ENCODE measurements at regions of chr1 and their contacts with region 1.

Region 1: DNA sequence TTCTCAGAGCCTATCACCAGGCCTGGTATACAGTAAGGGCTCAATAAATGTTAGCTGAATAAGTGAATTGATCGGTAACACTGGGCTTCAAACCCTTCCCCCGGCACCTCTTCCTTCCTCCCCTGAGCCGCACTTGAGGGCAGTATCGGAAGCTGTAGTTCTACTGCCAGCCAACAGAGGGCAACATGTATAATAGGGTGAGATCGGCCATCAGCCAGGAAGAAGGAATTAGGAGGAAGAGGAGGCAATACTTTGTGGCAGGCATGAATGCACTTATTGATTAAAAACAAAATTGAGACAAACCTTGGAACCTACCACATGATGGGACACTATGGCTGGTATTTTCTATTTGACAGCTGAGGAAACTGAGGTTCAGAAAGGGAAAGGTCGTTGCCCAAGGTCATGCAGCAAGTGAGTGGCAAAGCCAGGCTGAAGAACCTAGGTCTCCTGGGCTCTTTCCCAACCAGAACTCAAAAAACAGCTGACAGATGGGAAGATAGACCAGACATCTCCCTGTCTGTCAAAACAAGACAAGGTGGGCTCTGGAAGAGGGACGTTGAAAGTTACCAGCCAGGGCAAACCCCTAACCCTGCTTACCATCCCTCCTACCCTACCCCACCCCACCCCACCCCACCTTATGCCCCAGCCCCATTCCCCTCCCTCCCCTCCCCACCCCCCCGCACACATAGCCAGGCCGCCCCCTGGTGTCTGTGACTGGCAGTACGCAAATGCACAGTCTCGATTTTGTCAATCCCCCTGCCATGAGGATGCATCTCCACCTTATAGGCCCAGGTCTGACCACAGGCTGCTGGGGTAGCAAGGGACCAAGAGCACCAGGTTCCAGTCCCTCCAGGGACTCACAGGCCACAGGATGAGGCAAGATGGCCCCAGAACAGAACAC is 107.3 kb upstream of the RUNX3 start:
- DNase-seq: peak; percentile 52 to 84 (median 63)
- ATAC-seq: peak; percentile 77
- H3K4me3 ChIP-seq: no peak overlapping the region
- H3K4me3 Mint-ChIP-seq: peak overlapping the region; percentile 4
- H3K27ac ChIP-seq: no peak overlapping the region
- H3K27ac Mint-ChIP-seq: peak overlapping the region; percentile 28
- H3K4me1 ChIP-seq: peaks cover 56% of the 10 kb centered on the region
- H3K4me1 Mint-ChIP-seq: peaks cover 30% of the 10 kb centered on the region
- H3K27me3 ChIP-seq: no peaks in the 10 kb centered on the region
- H3K27me3 Mint-ChIP-seq: no peaks in the 10 kb centered on the region
- CTCF ChIP-seq: peak; percentile 72

Region 2: GRCh38 chr1:24952413-24952841 is 85.0 kb before region 1 on chr1:
- CTCF ChIA-PET with region 1: interaction called, 16 read pairs
- POLR2A ChIA-PET with region 1: interaction called, 6 read pairs
- intact Hi-C with region 1: no loop called
- DNase-seq: peak in 5 of 14 experiments; percentile 34 to 77 (median 68)
- ATAC-seq: peak; percentile 17
- H3K4me3 ChIP-seq: no peak overlapping the region
- H3K4me3 Mint-ChIP-seq: peak overlapping the region; percentile 54
- H3K27ac ChIP-seq: no peak overlapping the region
- H3K27ac Mint-ChIP-seq: peak overlapping the region; percentile 19
- H3K4me1 ChIP-seq: peaks cover 54% of the 10 kb centered on the region
- H3K4me1 Mint-ChIP-seq: peaks cover 63% of the 10 kb centered on the region
- H3K27me3 ChIP-seq: no peaks in the 10 kb centered on the region
- H3K27me3 Mint-ChIP-seq: no peaks in the 10 kb centered on the region
- CTCF ChIP-seq: no peak

Region 3: DNA sequence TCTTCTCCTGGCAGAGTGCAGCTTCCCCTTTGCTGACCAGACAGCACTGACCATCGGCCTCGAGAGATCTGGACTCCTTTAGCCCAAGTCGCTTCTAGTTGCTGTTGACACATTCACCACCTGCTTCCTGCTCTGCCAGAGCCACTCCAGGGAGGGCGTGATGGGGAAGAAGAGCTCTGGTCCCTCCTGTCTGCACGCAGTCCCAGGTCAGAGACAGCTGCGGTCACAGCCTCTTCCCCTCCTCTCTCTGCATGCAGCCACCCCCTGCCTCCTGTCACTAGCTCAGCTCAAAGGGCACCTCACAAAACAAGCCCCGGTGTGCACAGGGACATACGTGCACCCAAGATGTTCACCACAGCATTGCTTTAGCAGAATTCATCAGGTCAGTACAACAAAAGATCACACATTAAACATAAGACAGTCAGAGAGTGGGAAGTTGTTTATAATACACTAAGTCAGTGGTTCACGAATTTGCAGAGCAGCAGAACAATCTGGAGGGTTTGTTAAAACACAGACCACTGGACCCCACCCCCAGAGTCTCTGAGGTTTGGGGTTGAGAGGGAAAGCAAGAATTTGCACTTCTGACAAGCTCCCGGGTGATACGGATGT is 62.0 kb after region 1 on chr1:
- CTCF ChIA-PET with region 1: interaction called, 4 read pairs
- POLR2A ChIA-PET with region 1: interaction called, 3 read pairs
- intact Hi-C with region 1: loop called (anchors 1 to 2 kb)
- DNase-seq: peak in 8 of 14 experiments; percentile 6 to 74 (median 34)
- ATAC-seq: peak; percentile 55
- H3K4me3 ChIP-seq: no peak overlapping the region
- H3K4me3 Mint-ChIP-seq: peak overlapping the region; percentile 5
- H3K27ac ChIP-seq: no peak overlapping the region
- H3K27ac Mint-ChIP-seq: peak overlapping the region; percentile 24
- H3K4me1 ChIP-seq: peaks cover 66% of the 10 kb centered on the region
- H3K4me1 Mint-ChIP-seq: peaks cover 66% of the 10 kb centered on the region
- H3K27me3 ChIP-seq: no peaks in the 10 kb centered on the region
- H3K27me3 Mint-ChIP-seq: no peaks in the 10 kb centered on the region
- CTCF ChIP-seq: no peak

Region 4: GRCh38 chr1:25786887-25787759 is 749.7 kb after region 1 on chr1:
- CTCF ChIA-PET with region 1: no interaction called
- POLR2A ChIA-PET with region 1: no interaction called
- intact Hi-C with region 1: no loop called
- DNase-seq: no peak
- ATAC-seq: no peak
- H3K4me3 ChIP-seq: no peak overlapping the region
- H3K4me3 Mint-ChIP-seq: no peak overlapping the region
- H3K27ac ChIP-seq: peak overlapping the region in 1 of 2 donors; percentile 22
- H3K27ac Mint-ChIP-seq: peak overlapping the region; percentile 30
- H3K4me1 ChIP-seq: no peaks in the 10 kb centered on the region
- H3K4me1 Mint-ChIP-seq: peaks cover 5% of the 10 kb centered on the region
- H3K27me3 ChIP-seq: no peaks in the 10 kb centered on the region
- H3K27me3 Mint-ChIP-seq: no peaks in the 10 kb centered on the region
- CTCF ChIP-seq: no peak